HCT116 (cell line): ENCODE measurements at regions of chr20 and their contacts with region 1.

Region 1: DNA sequence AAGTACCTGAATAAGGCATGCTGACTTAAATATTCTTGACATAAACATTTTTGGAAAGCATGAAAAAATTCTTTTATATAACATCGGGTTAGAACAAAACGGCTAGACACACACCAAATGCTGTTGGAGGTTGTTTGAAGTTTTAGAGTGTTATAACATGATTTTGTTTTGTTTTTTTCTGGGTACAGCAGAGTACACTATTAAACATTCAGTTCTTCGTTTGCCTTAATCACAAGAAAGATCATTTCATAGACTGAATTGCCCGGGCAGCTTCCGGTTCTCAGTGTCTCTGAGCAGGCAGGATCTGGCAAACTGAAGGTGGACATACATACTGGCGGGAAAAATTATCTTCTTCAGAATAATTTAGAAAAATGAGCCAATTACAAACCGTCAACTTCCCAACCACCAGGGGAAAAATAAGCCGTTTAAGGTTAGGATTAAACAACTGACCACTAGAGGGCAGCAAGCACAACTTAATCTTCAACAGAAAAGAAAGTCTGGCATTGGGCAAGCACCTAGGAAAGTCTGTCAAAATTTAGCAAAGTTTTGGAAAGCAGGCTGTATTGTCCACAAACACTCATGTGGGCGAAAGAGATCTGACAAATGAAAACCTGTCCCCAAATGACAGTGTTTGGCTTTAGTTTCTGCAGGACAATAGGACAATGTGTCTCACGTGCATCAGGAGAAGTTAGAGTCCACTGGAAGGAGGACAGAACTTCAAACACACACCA is 15.0 kb downstream of the ZNF217 start:
- DNase-seq: peak; percentile 82
- ATAC-seq: peak; percentile 83
- H3K4me3 ChIP-seq: no peak overlapping the region
- H3K27ac ChIP-seq: peak overlapping the region; percentile 47; the same call in 1 of the 2 replicates
- H3K4me1 ChIP-seq: peaks cover 17 to 25% of the 10 kb centered on the region in 2 experiments
- H3K27me3 ChIP-seq: no peaks in the 10 kb centered on the region
- CTCF ChIP-seq: peak; percentile 71 to 85 (median 84); a peak in 5 of 6 replicates
- POLR2A ChIP-seq: no peak
- RAD21 ChIP-seq: peak; percentile 90

Region 2: GRCh38 chr20:53869466-53870258 is 291.0 kb after region 1 on chr20:
- CTCF ChIA-PET with region 1: interaction called, 6 read pairs
- POLR2A ChIA-PET with region 1: no interaction called
- RAD21 ChIA-PET with region 1: no interaction called
- intact Hi-C with region 1: loop called (anchors 1 kb)
- DNase-seq: peak; percentile 84
- ATAC-seq: peak; percentile 95
- H3K4me3 ChIP-seq: no peak overlapping the region
- H3K27ac ChIP-seq: peak overlapping the region; percentile 57
- H3K4me1 ChIP-seq: peaks cover 31 to 42% of the 10 kb centered on the region in 2 experiments
- H3K27me3 ChIP-seq: no peaks in the 10 kb centered on the region
- CTCF ChIP-seq: peak; percentile 67 to 90 (median 84)
- POLR2A ChIP-seq: no peak
- RAD21 ChIP-seq: peak; percentile 90

Region 3: DNA sequence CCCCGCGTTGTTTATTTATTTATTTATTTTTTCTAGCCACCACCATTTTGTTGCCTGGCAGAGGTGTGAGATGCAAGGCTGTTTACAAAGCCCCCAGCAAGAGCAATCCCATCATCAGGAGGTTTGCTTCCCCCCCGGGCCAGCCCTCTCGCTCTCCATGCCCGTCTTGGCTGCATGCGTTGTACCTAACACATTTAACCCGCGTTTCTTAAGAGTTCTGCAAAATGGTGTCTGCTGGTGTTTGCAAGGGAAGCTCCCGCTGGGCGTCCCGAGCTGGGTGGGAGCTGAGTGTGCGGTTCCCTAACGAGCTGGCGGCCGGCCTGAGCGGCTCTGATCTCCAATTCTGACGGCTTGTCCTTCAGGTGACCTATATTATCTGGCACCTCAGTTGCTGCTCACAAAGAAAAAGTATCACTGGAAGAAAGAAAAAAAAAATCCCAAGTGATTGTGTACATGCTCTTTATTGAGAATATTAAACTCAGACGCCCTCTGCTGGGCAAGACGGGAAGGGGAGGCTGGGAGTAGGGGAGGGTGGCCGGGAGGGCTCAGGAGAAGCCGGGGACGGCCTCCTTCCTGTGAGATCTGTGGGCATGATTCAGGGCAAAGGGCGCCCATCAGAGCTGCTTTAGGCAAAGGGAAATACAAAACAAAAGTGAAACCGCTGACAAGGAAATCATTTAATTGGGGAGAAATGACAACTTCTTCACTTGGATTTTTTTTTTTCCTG is 337.0 kb after region 1 on chr20:
- CTCF ChIA-PET with region 1: interaction called, 9 read pairs
- POLR2A ChIA-PET with region 1: no interaction called
- RAD21 ChIA-PET with region 1: interaction called in 1 of 2 experiments, 5 read pairs
- intact Hi-C with region 1: loop called (anchors 1 kb)
- DNase-seq: peak; percentile 72
- ATAC-seq: peak; percentile 91
- H3K4me3 ChIP-seq: peak overlapping the region; percentile 52 to 55
- H3K27ac ChIP-seq: peak overlapping the region; percentile 71
- H3K4me1 ChIP-seq: peaks cover 9 to 38% of the 10 kb centered on the region in 2 experiments
- H3K27me3 ChIP-seq: no peaks in the 10 kb centered on the region
- CTCF ChIP-seq: peak; percentile 78 to 89 (median 82); a peak in 5 of 6 replicates
- POLR2A ChIP-seq: no peak
- RAD21 ChIP-seq: peak; percentile 92

Region 4: GRCh38 chr20:53939572-53940359 is 361.1 kb after region 1 on chr20:
- CTCF ChIA-PET with region 1: interaction called, 24 read pairs
- POLR2A ChIA-PET with region 1: no interaction called
- RAD21 ChIA-PET with region 1: no interaction called
- intact Hi-C with region 1: loop called (anchors 1 kb)
- DNase-seq: peak; percentile 88
- ATAC-seq: peak; percentile 93
- H3K4me3 ChIP-seq: no peak overlapping the region
- H3K27ac ChIP-seq: no peak overlapping the region
- H3K4me1 ChIP-seq: peaks cover 0 to 22% of the 10 kb centered on the region in 2 experiments; a peak in 2 of 4 replicates
- H3K27me3 ChIP-seq: no peaks in the 10 kb centered on the region
- CTCF ChIP-seq: peak; percentile 74 to 85 (median 84)
- POLR2A ChIP-seq: no peak
- RAD21 ChIP-seq: peak; percentile 96

Region 5: GRCh38 chr20:54062812-54063280 is 484.2 kb after region 1 on chr20:
- CTCF ChIA-PET with region 1: no interaction called
- POLR2A ChIA-PET with region 1: no interaction called
- RAD21 ChIA-PET with region 1: no interaction called
- intact Hi-C with region 1: loop called (anchors 2 kb)
- DNase-seq: peak; percentile 42
- ATAC-seq: peak; percentile 64
- H3K4me3 ChIP-seq: no peak overlapping the region
- H3K27ac ChIP-seq: no peak overlapping the region
- H3K4me1 ChIP-seq: peaks cover 12 to 20% of the 10 kb centered on the region in 2 experiments
- H3K27me3 ChIP-seq: no peaks in the 10 kb centered on the region
- CTCF ChIP-seq: peak; percentile 57 to 71 (median 62)
- POLR2A ChIP-seq: no peak
- RAD21 ChIP-seq: peak; percentile 74

Region 6: DNA sequence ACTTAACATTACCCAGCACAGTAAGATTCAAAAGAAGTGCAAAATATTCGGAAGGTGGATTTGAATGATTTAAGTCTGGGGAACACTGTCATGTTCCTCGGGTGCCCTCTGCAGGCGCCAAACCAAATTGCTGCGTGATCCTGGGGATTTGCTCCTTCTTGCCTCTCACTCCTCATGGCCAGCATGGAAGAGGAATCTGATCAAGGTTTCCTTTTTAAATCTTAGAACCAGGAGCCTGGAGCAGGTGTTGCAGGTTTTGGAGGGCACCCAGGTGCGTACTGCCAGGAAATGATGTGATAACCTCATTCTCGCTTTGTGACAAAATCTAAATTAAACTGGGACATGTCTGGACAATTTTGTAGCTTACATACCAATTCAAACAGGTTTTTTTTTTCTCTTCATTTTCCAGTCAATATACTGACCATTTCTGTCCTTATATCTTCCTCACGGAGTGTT is 621.1 kb after region 1 on chr20:
- CTCF ChIA-PET with region 1: no interaction called
- POLR2A ChIA-PET with region 1: no interaction called
- RAD21 ChIA-PET with region 1: no interaction called
- intact Hi-C with region 1: loop called (anchors 5 kb)
- DNase-seq: peak; percentile 71
- ATAC-seq: peak; percentile 60
- H3K4me3 ChIP-seq: no peak overlapping the region
- H3K27ac ChIP-seq: no peak overlapping the region; the same call in 1 of the 2 replicates
- H3K4me1 ChIP-seq: peaks cover 39 to 52% of the 10 kb centered on the region in 2 experiments
- H3K27me3 ChIP-seq: no peaks in the 10 kb centered on the region
- CTCF ChIP-seq: peak; percentile 77 to 95 (median 93)
- POLR2A ChIP-seq: no peak
- RAD21 ChIP-seq: peak; percentile 94